Colonic mucosa (tissue), 4 donors: ENCODE measurements at regions of chr22 and their contacts with region 1.

Region 1: GRCh38 chr22:46674367-46674781 is 54.2 kb downstream of the GRAMD4 start:
- DNase-seq: no peak
- H3K4me3 ChIP-seq: no peak overlapping the region
- H3K27ac ChIP-seq: no peak overlapping the region
- H3K4me1 ChIP-seq: peaks cover 5% of the 10 kb centered on the region
- H3K27me3 ChIP-seq: no peaks in the 10 kb centered on the region
- CTCF ChIP-seq: no peak

Region 2: GRCh38 chr22:46584081-46584921 is 90.1 kb before region 1 on chr22:
- intact Hi-C with region 1: loop called (anchors 5 kb)
- DNase-seq: no peak
- H3K4me3 ChIP-seq: no peak overlapping the region
- H3K27ac ChIP-seq: no peak overlapping the region
- H3K4me1 ChIP-seq: peaks cover 42% of the 10 kb centered on the region
- H3K27me3 ChIP-seq: no peaks in the 10 kb centered on the region
- CTCF ChIP-seq: no peak